GM12878 (cell line): ENCODE measurements at regions of chr10 and their contacts with region 1.

Region 1: GRCh38 chr10:60769406-60769805 is 8.9 kb upstream of the CDK1 start:
- DNase-seq: no peak
- ATAC-seq: no peak
- H3K4me3 ChIP-seq: no peak overlapping the region
- H3K27ac ChIP-seq: no peak overlapping the region
- H3K4me1 ChIP-seq: no peaks in the 10 kb centered on the region
- H3K27me3 ChIP-seq: no peaks in the 10 kb centered on the region
- CTCF ChIP-seq: no peak
- EP300 ChIP-seq: no peak
- POLR2A ChIP-seq: no peak
- RAD21 ChIP-seq: no peak

Region 2: DNA sequence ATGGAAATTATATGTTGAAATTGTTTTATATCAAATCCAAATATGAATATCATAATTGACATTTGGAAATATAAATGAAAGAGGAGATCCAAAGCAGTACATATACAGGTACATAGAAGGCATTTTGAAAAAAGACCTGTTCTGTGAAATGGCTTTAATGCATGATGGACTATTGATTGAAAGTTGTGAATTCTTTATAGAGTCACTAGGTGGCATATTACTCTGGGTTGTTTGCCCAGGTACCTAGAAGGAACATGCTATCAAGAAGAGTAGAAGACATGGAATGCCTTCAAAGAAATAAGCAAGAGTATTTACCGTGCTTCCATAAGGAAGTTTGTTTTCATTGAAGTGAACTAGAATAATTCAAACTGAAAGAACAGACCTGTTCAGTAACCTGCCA is 219.7 kb before region 1 on chr10:
- CTCF ChIA-PET with region 1: interaction called, 4 read pairs
- POLR2A ChIA-PET with region 1: no interaction called
- RAD21 ChIA-PET with region 1: no interaction called
- SMC1A ChIA-PET with region 1: no interaction called
- in situ Hi-C with region 1: no loop called
- intact Hi-C with region 1: loop called (anchors 5 kb)
- DNase-seq: no peak
- ATAC-seq: peak; percentile 64
- H3K4me3 ChIP-seq: no peak overlapping the region
- H3K27ac ChIP-seq: no peak overlapping the region
- H3K4me1 ChIP-seq: no peaks in the 10 kb centered on the region
- H3K27me3 ChIP-seq: no peaks in the 10 kb centered on the region
- CTCF ChIP-seq: peak; percentile 18 to 32 (median 25); a peak in 2 of 6 replicates
- EP300 ChIP-seq: no peak
- POLR2A ChIP-seq: no peak
- RAD21 ChIP-seq: 0 out of 2 replicates have a peak, but pooled peaks have one; percentile 19

Region 3: GRCh38 chr10:60652628-60653027 is 116.8 kb before region 1 on chr10:
- CTCF ChIA-PET with region 1: no interaction called
- POLR2A ChIA-PET with region 1: no interaction called
- RAD21 ChIA-PET with region 1: no interaction called
- SMC1A ChIA-PET with region 1: no interaction called
- in situ Hi-C with region 1: no loop called
- intact Hi-C with region 1: loop called (anchors 5 kb)
- DNase-seq: peak; percentile 13
- ATAC-seq: peak; percentile 94
- H3K4me3 ChIP-seq: no peak overlapping the region
- H3K27ac ChIP-seq: no peak overlapping the region
- H3K4me1 ChIP-seq: no peaks in the 10 kb centered on the region
- H3K27me3 ChIP-seq: no peaks in the 10 kb centered on the region
- CTCF ChIP-seq: no peak
- EP300 ChIP-seq: no peak
- POLR2A ChIP-seq: no peak
- RAD21 ChIP-seq: no peak

Region 4: DNA sequence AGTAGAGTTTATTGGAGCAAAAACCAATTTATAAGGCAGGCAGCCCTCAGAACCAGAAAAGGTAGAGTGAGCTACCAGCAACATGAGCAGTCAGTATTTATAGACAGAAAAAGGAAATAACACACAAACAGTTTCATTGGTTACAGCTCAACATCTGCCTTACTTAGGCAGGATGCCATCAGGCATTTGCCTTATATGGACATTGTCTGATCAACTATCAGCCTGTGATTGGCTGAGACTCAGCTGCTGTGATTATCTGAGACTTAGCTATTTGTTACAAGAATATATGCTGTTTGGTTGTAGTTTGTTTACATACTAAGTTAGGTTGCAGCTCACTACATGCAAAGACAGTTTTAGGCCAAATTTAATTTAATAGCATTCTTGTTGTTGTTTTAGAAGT is 51.6 kb before region 1 on chr10:
- CTCF ChIA-PET with region 1: no interaction called
- POLR2A ChIA-PET with region 1: no interaction called
- RAD21 ChIA-PET with region 1: no interaction called
- SMC1A ChIA-PET with region 1: no interaction called
- in situ Hi-C with region 1: no loop called
- intact Hi-C with region 1: no loop called
- DNase-seq: no peak
- ATAC-seq: peak; percentile 78
- H3K4me3 ChIP-seq: no peak overlapping the region
- H3K27ac ChIP-seq: no peak overlapping the region
- H3K4me1 ChIP-seq: no peaks in the 10 kb centered on the region
- H3K27me3 ChIP-seq: no peaks in the 10 kb centered on the region
- CTCF ChIP-seq: no peak
- EP300 ChIP-seq: no peak
- POLR2A ChIP-seq: no peak
- RAD21 ChIP-seq: no peak

Region 5: GRCh38 chr10:60823324-60823723 is 53.9 kb after region 1 on chr10:
- CTCF ChIA-PET with region 1: no interaction called
- POLR2A ChIA-PET with region 1: no interaction called
- RAD21 ChIA-PET with region 1: no interaction called
- SMC1A ChIA-PET with region 1: no interaction called
- in situ Hi-C with region 1: no loop called
- intact Hi-C with region 1: no loop called
- DNase-seq: no peak
- ATAC-seq: no peak
- H3K4me3 ChIP-seq: no peak overlapping the region
- H3K27ac ChIP-seq: no peak overlapping the region
- H3K4me1 ChIP-seq: no peaks in the 10 kb centered on the region
- H3K27me3 ChIP-seq: no peaks in the 10 kb centered on the region; a peak in 1 of 4 replicates
- CTCF ChIP-seq: no peak
- EP300 ChIP-seq: no peak
- POLR2A ChIP-seq: no peak
- RAD21 ChIP-seq: no peak